Endothelial cell of umbilical vein (primary cell): ENCODE measurements at regions of chr4 and their contacts with region 1.

Region 1: GRCh38 chr4:83093130-83093529 is 21.4 kb downstream of the PLAC8 start:
- DNase-seq: no peak
- H3K4me3 ChIP-seq: no peak overlapping the region
- H3K27ac ChIP-seq: no peak overlapping the region
- H3K4me1 ChIP-seq: peaks cover 18% of the 10 kb centered on the region
- H3K27me3 ChIP-seq: no peaks in the 10 kb centered on the region
- CTCF ChIP-seq: no peak
- POLR2A ChIP-seq: no peak

Region 2: GRCh38 chr4:83110223-83110945 is 17.3 kb after region 1 on chr4:
- CTCF ChIA-PET with region 1: interaction called, 29 read pairs
- POLR2A ChIA-PET with region 1: interaction called, 3 read pairs
- dilution Hi-C with region 1: no loop called
- intact Hi-C with region 1: no loop called
- DNase-seq: peak; percentile 86
- H3K4me3 ChIP-seq: peak overlapping the region; percentile 48 to 78 (median 70)
- H3K27ac ChIP-seq: peak overlapping the region; percentile 71
- H3K4me1 ChIP-seq: peaks cover 13% of the 10 kb centered on the region
- H3K27me3 ChIP-seq: no peaks in the 10 kb centered on the region
- CTCF ChIP-seq: peak; percentile 72 to 87
- POLR2A ChIP-seq: peak; percentile 31